PC-3 (cell line): ENCODE measurements at regions of chr21 and their contacts with region 1.

Region 1: DNA sequence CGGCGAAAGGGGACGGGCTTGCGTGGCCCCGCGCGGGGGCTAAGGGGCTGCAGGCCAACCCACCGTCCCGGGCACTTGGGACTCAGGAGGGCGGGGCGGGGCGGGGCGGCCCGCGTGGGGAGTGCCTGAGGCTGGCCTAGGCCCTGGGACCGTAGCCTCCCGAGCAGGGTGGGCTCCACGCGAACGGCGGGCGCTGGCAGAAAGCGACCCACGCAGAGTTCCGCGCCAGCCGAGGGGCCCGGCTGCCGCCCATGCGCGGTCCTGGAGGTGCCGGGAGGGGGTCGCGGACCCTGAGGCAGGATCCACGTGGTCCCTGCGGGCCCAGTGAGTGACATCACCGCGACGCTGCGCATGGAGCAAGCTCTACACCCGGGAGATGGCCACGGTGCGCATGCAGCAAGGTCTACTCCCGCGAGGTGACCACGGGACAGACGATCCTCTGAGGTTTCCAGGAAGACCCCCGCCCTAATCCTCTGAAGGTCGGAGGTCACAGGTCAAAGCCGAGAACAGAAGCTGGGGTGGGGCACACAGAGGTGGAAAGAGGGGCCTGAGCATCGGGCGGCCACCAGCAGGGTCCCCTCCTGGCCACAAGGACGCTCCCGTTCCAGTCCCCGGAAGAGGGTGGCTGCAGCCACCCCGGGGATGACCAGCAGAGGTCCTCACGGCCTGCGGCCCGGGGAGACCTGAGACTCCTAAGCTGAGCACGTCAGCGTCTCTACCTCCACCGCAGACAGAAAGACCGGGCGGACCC is 13.5 kb upstream of the SLC19A1 start:
- DNase-seq: peak; percentile 89
- ATAC-seq: peak; percentile 77
- H3K4me3 ChIP-seq: peak overlapping the region; percentile 66
- H3K27ac ChIP-seq: peak overlapping the region; percentile 85
- H3K4me1 ChIP-seq: peaks cover 14% of the 10 kb centered on the region
- H3K27me3 ChIP-seq: no peaks in the 10 kb centered on the region
- CTCF ChIP-seq: peak; percentile 72

Region 2: DNA sequence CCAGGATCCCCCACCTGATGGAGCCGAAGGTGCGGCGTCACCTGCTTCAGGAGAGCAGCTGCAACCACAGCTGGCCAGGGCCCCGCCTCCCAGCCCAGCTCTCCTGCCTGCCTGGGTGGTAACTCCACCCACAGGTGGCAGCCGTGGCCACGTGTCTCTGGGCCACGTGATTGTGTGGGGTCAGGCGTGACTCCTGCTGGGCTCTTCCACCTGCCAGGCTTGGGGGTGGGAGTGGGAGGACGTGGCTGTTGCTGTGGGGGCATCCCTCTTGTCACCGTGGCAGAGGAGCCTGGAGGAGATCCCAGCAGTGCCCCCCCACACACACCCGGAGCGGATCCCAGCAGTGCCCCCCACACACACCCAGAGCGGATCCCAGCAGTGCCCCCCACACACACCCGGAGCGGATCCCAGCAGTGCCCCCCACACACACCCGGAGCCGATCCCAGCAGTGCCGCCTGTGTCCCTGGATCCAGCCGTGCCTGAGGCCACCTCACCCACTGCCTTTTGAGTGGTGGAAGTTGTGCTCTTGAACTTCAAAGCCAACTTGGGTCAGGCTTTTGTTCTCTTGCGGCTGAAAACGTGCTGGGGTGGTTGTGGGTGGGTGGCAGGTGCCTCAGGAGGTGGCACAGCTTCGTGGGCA is 300.2 kb before region 1 on chr21:
- CTCF ChIA-PET with region 1: interaction called, 13 read pairs
- POLR2A ChIA-PET with region 1: no interaction called
- intact Hi-C with region 1: no loop called
- DNase-seq: peak; percentile 53
- ATAC-seq: peak; percentile 62
- H3K4me3 ChIP-seq: peak overlapping the region; percentile 56
- H3K27ac ChIP-seq: no peak overlapping the region
- H3K4me1 ChIP-seq: peaks cover 12% of the 10 kb centered on the region
- H3K27me3 ChIP-seq: 0 out of 2 replicates have a peak, but pooled peaks cover 8% of the 10 kb centered on the region
- CTCF ChIP-seq: no peak

Region 3: DNA sequence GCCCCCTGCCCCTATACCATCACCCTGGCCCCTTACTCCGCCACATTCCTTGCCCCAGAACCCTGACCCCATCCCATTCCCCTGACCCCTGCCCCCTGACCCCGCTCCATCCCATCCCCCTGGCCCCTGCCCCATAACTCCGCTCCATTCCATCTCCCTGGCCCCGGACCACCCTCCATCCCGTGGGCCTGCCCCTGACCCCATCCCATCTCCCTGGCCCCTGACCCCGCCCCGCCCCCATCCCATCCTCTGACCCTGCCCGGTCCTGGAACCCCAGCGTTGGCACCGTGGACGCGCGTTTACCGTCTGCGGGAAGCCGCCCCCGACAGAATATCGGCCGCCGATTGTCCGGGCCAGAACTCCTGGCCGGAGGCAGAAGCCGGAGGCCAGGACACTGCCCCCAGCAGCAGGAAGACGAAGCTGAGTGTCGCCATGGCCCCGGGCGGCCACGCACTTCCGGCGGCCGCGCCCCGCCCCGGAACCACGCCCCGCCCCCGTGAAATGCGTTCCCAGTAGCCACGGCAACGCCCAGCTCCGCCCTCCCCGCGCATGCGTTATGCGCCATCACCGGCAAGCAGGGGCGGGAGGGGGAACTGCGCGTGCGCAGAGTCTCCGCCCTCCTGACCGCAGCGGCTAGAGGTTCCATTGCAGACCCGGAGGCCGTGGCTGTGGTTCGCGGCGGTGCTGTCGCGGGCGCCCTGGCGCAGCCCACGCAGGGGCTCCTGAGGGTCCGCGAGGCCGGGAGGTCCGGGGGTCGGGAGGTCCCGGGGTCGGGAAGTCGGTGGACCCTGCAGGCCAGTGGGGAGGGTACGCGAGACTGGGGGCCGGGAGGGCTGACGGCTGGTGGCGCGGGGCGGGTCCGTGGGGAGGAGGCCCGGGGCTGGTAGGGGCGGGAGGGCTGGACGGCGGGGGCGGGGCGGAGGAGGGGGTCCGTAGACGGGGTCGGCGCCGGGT is 268.0 kb before region 1 on chr21 and contains the start of gene POFUT2:
- CTCF ChIA-PET with region 1: interaction called, 10 read pairs
- POLR2A ChIA-PET with region 1: no interaction called
- intact Hi-C with region 1: no loop called
- DNase-seq: peak; percentile 98
- ATAC-seq: peak; percentile 65
- H3K4me3 ChIP-seq: peak within 1 kb of the TSS; percentile 92
- H3K27ac ChIP-seq: no peak within 1 kb of the TSS
- H3K4me1 ChIP-seq: peaks cover 16% of the 10 kb centered on the region
- H3K27me3 ChIP-seq: no peaks in the 10 kb centered on the region
- CTCF ChIP-seq: no peak
- total RNA-seq, gene POFUT2: 19.6 and 28.2 TPM in 2 replicates

Region 4: GRCh38 chr21:45517249-45518065 is 38.3 kb before region 1 on chr21:
- CTCF ChIA-PET with region 1: no interaction called
- POLR2A ChIA-PET with region 1: no interaction called
- intact Hi-C with region 1: no loop called
- DNase-seq: no peak
- ATAC-seq: no peak
- H3K4me3 ChIP-seq: no peak overlapping the region
- H3K27ac ChIP-seq: no peak overlapping the region
- H3K4me1 ChIP-seq: peaks cover 30% of the 10 kb centered on the region
- H3K27me3 ChIP-seq: no peaks in the 10 kb centered on the region
- CTCF ChIP-seq: no peak

Region 5: DNA sequence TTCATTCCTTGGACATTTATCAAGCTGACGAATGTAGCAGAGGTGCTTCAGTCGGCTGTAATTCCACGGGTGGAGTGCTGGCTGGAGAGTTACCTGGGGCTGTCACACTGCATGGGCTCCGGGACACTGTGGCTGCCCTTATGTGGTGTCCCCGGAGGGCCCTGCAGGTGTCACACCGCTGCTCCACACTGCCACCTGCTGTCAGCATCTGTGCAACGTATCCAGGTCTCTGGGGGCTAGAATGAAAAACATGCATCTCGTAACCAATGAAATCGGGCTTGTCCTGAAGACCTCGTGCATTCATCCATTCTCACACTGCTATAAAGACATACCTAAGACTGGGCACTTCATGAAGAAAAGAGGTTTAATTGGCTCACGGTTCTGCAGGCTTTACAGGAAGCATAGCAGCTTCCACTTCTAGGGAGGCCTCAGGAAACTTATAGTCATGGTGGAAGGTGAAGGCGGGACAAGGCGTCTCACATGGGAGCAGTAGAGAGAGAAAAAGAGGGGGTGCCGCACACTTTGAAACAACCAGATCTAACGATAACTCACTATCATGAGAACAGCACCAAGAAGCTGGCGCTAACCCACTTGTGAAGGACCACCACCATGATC is 41.1 kb after region 1 on chr21:
- CTCF ChIA-PET with region 1: interaction called, 4 read pairs
- POLR2A ChIA-PET with region 1: no interaction called
- intact Hi-C with region 1: loop called (anchors 1 kb)
- DNase-seq: peak; percentile 79
- ATAC-seq: peak; percentile 98
- H3K4me3 ChIP-seq: no peak overlapping the region
- H3K27ac ChIP-seq: no peak overlapping the region
- H3K4me1 ChIP-seq: no peaks in the 10 kb centered on the region
- H3K27me3 ChIP-seq: peaks cover 20% of the 10 kb centered on the region; the same call in 1 of the 2 replicates
- CTCF ChIP-seq: peak; percentile 92

Region 6: GRCh38 chr21:45643021-45643980 is 87.6 kb after region 1 on chr21 and contains the start of gene PCBP3:
- CTCF ChIA-PET with region 1: interaction called, 8 read pairs
- POLR2A ChIA-PET with region 1: no interaction called
- intact Hi-C with region 1: loop called (anchors 2 kb)
- DNase-seq: peak; percentile 96
- ATAC-seq: peak; percentile 80
- H3K4me3 ChIP-seq: peak within 1 kb of the TSS; percentile 66
- H3K27ac ChIP-seq: no peak within 1 kb of the TSS
- H3K4me1 ChIP-seq: peaks cover 9% of the 10 kb centered on the region
- H3K27me3 ChIP-seq: no peaks in the 10 kb centered on the region
- CTCF ChIP-seq: no peak
- total RNA-seq, gene PCBP3: 2.4 and 3.0 TPM in 2 replicates

Region 7: GRCh38 chr21:45669382-45669781 is 113.7 kb after region 1 on chr21:
- CTCF ChIA-PET with region 1: no interaction called
- POLR2A ChIA-PET with region 1: no interaction called
- intact Hi-C with region 1: no loop called
- DNase-seq: no peak
- ATAC-seq: no peak
- H3K4me3 ChIP-seq: no peak overlapping the region
- H3K27ac ChIP-seq: no peak overlapping the region
- H3K4me1 ChIP-seq: no peaks in the 10 kb centered on the region
- H3K27me3 ChIP-seq: no peaks in the 10 kb centered on the region
- CTCF ChIP-seq: no peak

Region 8: GRCh38 chr21:45820171-45821091 is 264.7 kb after region 1 on chr21:
- CTCF ChIA-PET with region 1: interaction called, 4 read pairs
- POLR2A ChIA-PET with region 1: no interaction called
- intact Hi-C with region 1: loop called (anchors 1 kb)
- DNase-seq: peak; percentile 95
- ATAC-seq: peak; percentile 68
- H3K4me3 ChIP-seq: no peak overlapping the region
- H3K27ac ChIP-seq: peak overlapping the region; percentile 90
- H3K4me1 ChIP-seq: peaks cover 31% of the 10 kb centered on the region
- H3K27me3 ChIP-seq: no peaks in the 10 kb centered on the region
- CTCF ChIP-seq: peak; percentile 95

Region 9: GRCh38 chr21:46334351-46335140 is 778.8 kb after region 1 on chr21:
- CTCF ChIA-PET with region 1: interaction called, 14 read pairs
- POLR2A ChIA-PET with region 1: no interaction called
- intact Hi-C with region 1: no loop called
- DNase-seq: no peak
- ATAC-seq: no peak
- H3K4me3 ChIP-seq: no peak overlapping the region
- H3K27ac ChIP-seq: no peak overlapping the region
- H3K4me1 ChIP-seq: peaks cover 9% of the 10 kb centered on the region; the same call in 1 of the 2 replicates
- H3K27me3 ChIP-seq: no peaks in the 10 kb centered on the region
- CTCF ChIP-seq: no peak